ENCODE measurements at regions of chr20 and their contacts with region 1.

Region 1: DNA sequence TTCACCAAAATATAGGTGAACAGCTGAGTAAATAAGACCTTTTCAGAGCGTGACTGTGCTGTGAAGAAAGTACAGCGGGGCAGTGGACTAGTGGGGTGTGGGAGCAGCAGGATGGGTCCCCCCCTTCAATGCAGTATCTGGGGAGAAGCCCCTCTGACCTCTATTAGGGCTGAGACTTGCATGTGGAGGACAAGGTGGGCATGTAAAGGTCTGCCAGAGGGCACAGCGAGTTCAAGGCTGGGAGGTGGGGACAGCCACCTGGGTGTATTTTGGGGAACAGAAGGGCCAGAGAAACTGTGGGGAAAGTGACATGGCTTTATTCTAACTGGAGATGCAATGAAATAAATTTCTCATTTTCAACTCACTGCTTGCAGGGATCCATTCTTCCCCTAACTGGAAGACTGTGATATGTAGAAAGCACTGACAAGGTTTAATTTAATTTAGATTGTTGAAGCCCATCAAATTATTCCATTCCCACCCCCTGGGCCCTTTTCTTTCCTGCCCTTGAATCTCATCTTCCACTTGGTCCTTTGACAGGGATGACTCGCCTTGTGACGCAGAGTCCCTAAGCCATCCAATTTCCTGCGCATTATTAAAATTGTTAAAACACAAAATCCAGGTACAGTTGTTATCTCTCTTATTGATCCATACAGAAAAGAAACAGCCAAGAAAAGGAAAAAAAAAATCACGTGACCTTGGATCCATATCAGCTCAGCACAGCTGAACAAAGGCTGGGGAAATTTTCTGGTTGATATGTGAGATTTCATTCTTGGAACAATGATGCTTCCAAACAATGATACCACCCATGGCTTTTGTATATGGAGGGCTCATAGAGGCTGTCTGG is 154.6 kb upstream of the SULF2 start:
- DNase-seq: no peak
- H3K4me3 ChIP-seq: no peak overlapping the region
- H3K27ac ChIP-seq: no peak overlapping the region
- H3K4me1 ChIP-seq: no peaks in the 10 kb centered on the region
- H3K27me3 ChIP-seq: peaks cover 12% of the 10 kb centered on the region
- CTCF ChIP-seq: no peak
- EP300 ChIP-seq: no peak
- POLR2A ChIP-seq: no peak

Region 2: GRCh38 chr20:47919672-47920071 is 20.2 kb before region 1 on chr20:
- in situ Hi-C with region 1: no loop called
- intact Hi-C with region 1: loop called (anchors 1 kb)
- DNase-seq: no peak
- H3K4me3 ChIP-seq: no peak overlapping the region
- H3K27ac ChIP-seq: no peak overlapping the region
- H3K4me1 ChIP-seq: peaks cover 0 to 10% (median 3%) of the 10 kb centered on the region in 4 donors
- H3K27me3 ChIP-seq: peaks cover 35% of the 10 kb centered on the region
- CTCF ChIP-seq: no peak
- EP300 ChIP-seq: no peak
- POLR2A ChIP-seq: no peak

Region 3: DNA sequence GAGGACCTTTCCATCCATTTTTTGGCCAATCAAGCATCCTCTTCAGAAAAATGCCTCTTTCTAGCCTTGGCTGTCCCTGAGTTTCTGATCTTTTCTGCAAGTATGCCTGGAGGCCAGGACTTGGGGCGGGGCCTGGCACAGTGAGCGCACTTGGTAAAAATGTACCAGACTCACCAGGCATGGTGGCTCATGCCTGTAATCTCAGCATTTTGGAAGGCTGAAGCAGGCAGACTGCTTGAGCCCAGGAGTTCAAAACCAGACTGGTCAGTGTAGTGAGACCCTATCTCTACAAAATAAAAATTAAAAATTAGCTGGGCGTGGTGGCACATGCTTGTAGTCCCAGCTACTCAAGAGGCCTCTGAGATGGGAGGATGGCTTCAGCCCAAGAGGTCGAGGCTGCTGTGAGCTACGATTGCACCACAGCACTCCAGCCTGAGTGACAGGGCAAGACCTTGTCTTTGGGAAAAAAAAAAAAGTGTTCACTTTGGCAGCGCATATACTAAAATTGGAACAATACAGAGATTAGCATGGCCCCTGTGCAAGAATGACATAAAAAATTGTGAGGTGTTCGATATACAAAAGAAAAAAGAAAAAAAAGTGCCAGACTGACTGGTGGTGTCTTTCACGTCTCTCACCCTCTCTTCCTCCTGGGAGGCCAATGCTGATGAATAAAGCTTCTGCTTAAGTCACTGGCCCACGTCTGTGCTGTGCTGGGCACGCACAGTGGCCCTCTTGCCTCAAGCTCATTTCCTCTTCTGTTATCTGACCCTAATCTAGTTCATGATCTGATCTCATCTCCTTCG is 1854.7 kb after region 1 on chr20:
- in situ Hi-C with region 1: no loop called
- intact Hi-C with region 1: no loop called
- DNase-seq: peak; percentile 46
- H3K4me3 ChIP-seq: no peak overlapping the region
- H3K27ac ChIP-seq: peak overlapping the region; percentile 81 to 90 (median 87)
- H3K4me1 ChIP-seq: peaks cover 0 to 47% (median 18%) of the 10 kb centered on the region in 4 donors
- H3K27me3 ChIP-seq: no peaks in the 10 kb centered on the region
- CTCF ChIP-seq: no peak
- EP300 ChIP-seq: no peak
- POLR2A ChIP-seq: no peak